ENCODE measurements at regions of chr21 and their contacts with region 1.

Region 1: DNA sequence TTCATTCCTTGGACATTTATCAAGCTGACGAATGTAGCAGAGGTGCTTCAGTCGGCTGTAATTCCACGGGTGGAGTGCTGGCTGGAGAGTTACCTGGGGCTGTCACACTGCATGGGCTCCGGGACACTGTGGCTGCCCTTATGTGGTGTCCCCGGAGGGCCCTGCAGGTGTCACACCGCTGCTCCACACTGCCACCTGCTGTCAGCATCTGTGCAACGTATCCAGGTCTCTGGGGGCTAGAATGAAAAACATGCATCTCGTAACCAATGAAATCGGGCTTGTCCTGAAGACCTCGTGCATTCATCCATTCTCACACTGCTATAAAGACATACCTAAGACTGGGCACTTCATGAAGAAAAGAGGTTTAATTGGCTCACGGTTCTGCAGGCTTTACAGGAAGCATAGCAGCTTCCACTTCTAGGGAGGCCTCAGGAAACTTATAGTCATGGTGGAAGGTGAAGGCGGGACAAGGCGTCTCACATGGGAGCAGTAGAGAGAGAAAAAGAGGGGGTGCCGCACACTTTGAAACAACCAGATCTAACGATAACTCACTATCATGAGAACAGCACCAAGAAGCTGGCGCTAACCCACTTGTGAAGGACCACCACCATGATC is 46.7 kb upstream of the PCBP3 start:
- DNase-seq: peak; percentile 65 to 85 (median 79)
- ATAC-seq: peak; percentile 82
- H3K4me3 ChIP-seq: no peak overlapping the region
- H3K4me3 Mint-ChIP-seq: peak overlapping the region in 1 of 10 donors; percentile 6
- H3K27ac ChIP-seq: no peak overlapping the region
- H3K27ac Mint-ChIP-seq: peak overlapping the region in 7 of 9 donors; percentile 7 to 88 (median 82)
- H3K4me1 ChIP-seq: peaks cover 10 to 20% of the 10 kb centered on the region in 2 donors
- H3K4me1 Mint-ChIP-seq: peaks cover 9 to 29% (median 13%) of the 10 kb centered on the region in 7 donors
- H3K27me3 ChIP-seq: no peaks in the 10 kb centered on the region
- H3K27me3 Mint-ChIP-seq: no peaks in the 10 kb centered on the region

Region 2: GRCh38 chr21:45287438-45288391 is 309.1 kb before region 1 on chr21 and contains the start of gene POFUT2:
- CTCF ChIA-PET with region 1: no interaction called
- POLR2A ChIA-PET with region 1: no interaction called
- intact Hi-C with region 1: loop called (anchors 1 to 5 kb)
- DNase-seq: peak; percentile 95 to 100 (median 98)
- ATAC-seq: peak; percentile 91
- H3K4me3 ChIP-seq: peak within 1 kb of the TSS; percentile 68
- H3K4me3 Mint-ChIP-seq: peak within 1 kb of the TSS; percentile 68 to 88 (median 87)
- H3K27ac ChIP-seq: peak within 1 kb of the TSS; percentile 97
- H3K27ac Mint-ChIP-seq: peak within 1 kb of the TSS; percentile 72 to 93 (median 87)
- H3K4me1 ChIP-seq: peaks cover 7 to 16% of the 10 kb centered on the region in 2 donors
- H3K4me1 Mint-ChIP-seq: peaks cover 11 to 46% (median 30%) of the 10 kb centered on the region in 7 donors
- H3K27me3 ChIP-seq: no peaks in the 10 kb centered on the region
- H3K27me3 Mint-ChIP-seq: peaks cover 0 to 10% (median 0%) of the 10 kb centered on the region in 5 donors
- total RNA-seq, gene POFUT2: 20.1 to 53.3 (median 47.8) TPM

Region 3: GRCh38 chr21:45478115-45478801 is 118.6 kb before region 1 on chr21:
- CTCF ChIA-PET with region 1: interaction called, 4 read pairs
- POLR2A ChIA-PET with region 1: interaction called, 3 read pairs
- intact Hi-C with region 1: loop called (anchors 1 kb)
- DNase-seq: peak; percentile 66 to 88 (median 84)
- ATAC-seq: peak; percentile 88
- H3K4me3 ChIP-seq: peak overlapping the region; percentile 78
- H3K4me3 Mint-ChIP-seq: peak overlapping the region; percentile 78 to 91 (median 84)
- H3K27ac ChIP-seq: peak overlapping the region; percentile 93
- H3K27ac Mint-ChIP-seq: peak overlapping the region; percentile 93 to 100 (median 99)
- H3K4me1 ChIP-seq: peaks cover 14 to 53% of the 10 kb centered on the region in 2 donors
- H3K4me1 Mint-ChIP-seq: peaks cover 27 to 65% (median 43%) of the 10 kb centered on the region in 7 donors
- H3K27me3 ChIP-seq: no peaks in the 10 kb centered on the region
- H3K27me3 Mint-ChIP-seq: no peaks in the 10 kb centered on the region

Region 4: GRCh38 chr21:45554477-45555175 is 42.2 kb before region 1 on chr21:
- CTCF ChIA-PET with region 1: interaction called, 3 read pairs
- POLR2A ChIA-PET with region 1: no interaction called
- intact Hi-C with region 1: loop called (anchors 1 kb)
- DNase-seq: peak; percentile 74 to 99 (median 91)
- ATAC-seq: peak; percentile 93
- H3K4me3 ChIP-seq: peak overlapping the region; percentile 89
- H3K4me3 Mint-ChIP-seq: peak overlapping the region; percentile 92 to 99 (median 96)
- H3K27ac ChIP-seq: peak overlapping the region; percentile 67
- H3K27ac Mint-ChIP-seq: peak overlapping the region; percentile 87 to 99 (median 96)
- H3K4me1 ChIP-seq: peaks cover 24 to 26% of the 10 kb centered on the region in 2 donors
- H3K4me1 Mint-ChIP-seq: peaks cover 22 to 39% (median 28%) of the 10 kb centered on the region in 7 donors
- H3K27me3 ChIP-seq: no peaks in the 10 kb centered on the region
- H3K27me3 Mint-ChIP-seq: no peaks in the 10 kb centered on the region

Region 5: DNA sequence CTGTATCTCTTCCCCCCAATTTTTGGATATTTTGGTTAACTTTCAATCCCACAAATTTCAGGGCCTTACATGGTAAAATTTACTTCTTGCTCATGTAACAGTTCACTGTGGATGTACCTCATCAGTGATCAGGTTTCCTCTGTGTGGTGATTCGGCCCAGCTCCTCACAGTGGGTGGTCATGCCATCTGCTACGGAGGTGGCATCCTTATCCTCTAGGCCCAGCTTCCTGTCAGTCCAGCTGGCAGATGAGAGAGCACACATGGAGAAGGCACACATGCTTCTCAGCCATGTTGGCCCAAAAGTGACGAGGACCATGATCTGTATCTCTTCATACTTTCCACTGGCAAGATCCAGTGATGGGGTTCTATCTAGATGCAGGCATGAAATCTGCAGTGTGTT is 73.9 kb after region 1 on chr21:
- CTCF ChIA-PET with region 1: no interaction called
- POLR2A ChIA-PET with region 1: no interaction called
- intact Hi-C with region 1: no loop called
- DNase-seq: no peak
- ATAC-seq: no peak
- H3K4me3 ChIP-seq: no peak overlapping the region
- H3K4me3 Mint-ChIP-seq: no peak overlapping the region
- H3K27ac ChIP-seq: no peak overlapping the region
- H3K27ac Mint-ChIP-seq: no peak overlapping the region
- H3K4me1 ChIP-seq: no peaks in the 10 kb centered on the region
- H3K4me1 Mint-ChIP-seq: peaks cover 0 to 3% (median 0%) of the 10 kb centered on the region in 7 donors
- H3K27me3 ChIP-seq: no peaks in the 10 kb centered on the region
- H3K27me3 Mint-ChIP-seq: no peaks in the 10 kb centered on the region

Region 6: GRCh38 chr21:45724345-45724961 is 127.6 kb after region 1 on chr21:
- CTCF ChIA-PET with region 1: no interaction called
- POLR2A ChIA-PET with region 1: no interaction called
- intact Hi-C with region 1: no loop called
- DNase-seq: no peak
- ATAC-seq: no peak
- H3K4me3 ChIP-seq: no peak overlapping the region
- H3K4me3 Mint-ChIP-seq: no peak overlapping the region
- H3K27ac ChIP-seq: no peak overlapping the region
- H3K27ac Mint-ChIP-seq: peak overlapping the region in 1 of 9 donors; percentile 86
- H3K4me1 ChIP-seq: no peaks in the 10 kb centered on the region
- H3K4me1 Mint-ChIP-seq: peaks cover 0 to 12% (median 3%) of the 10 kb centered on the region in 7 donors
- H3K27me3 ChIP-seq: no peaks in the 10 kb centered on the region
- H3K27me3 Mint-ChIP-seq: peaks cover 0 to 5% (median 0%) of the 10 kb centered on the region in 5 donors

Region 7: DNA sequence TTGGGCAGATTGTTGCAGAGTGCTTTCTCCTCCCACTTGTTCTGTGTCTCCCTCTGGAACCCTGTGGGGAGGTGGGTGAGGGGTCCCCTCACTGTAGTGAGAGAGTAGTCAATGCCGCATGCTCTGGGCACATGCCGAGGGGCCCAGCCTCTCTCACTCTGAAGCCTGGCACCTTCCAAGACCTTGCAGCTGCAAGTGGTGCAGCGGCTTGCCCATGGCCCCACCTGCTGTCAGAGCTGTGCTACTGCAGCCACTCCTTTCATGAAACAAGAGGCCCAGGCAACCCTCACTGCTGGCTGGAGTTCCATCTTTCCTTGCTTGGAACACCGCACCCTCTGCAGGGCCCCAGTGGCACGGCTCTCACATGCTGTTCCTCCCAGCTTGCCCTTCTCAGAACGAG is 326.3 kb after region 1 on chr21:
- CTCF ChIA-PET with region 1: no interaction called
- POLR2A ChIA-PET with region 1: no interaction called
- intact Hi-C with region 1: loop called in 1 of 2 experiments (anchors 1 kb)
- DNase-seq: peak; percentile 34 to 84 (median 75)
- ATAC-seq: peak; percentile 90
- H3K4me3 ChIP-seq: no peak overlapping the region
- H3K4me3 Mint-ChIP-seq: peak overlapping the region in 2 of 10 donors; percentile 44 to 51
- H3K27ac ChIP-seq: no peak overlapping the region
- H3K27ac Mint-ChIP-seq: no peak overlapping the region
- H3K4me1 ChIP-seq: peaks cover 0 to 14% of the 10 kb centered on the region in 2 donors
- H3K4me1 Mint-ChIP-seq: peaks cover 0 to 22% (median 17%) of the 10 kb centered on the region in 7 donors
- H3K27me3 ChIP-seq: no peaks in the 10 kb centered on the region
- H3K27me3 Mint-ChIP-seq: no peaks in the 10 kb centered on the region